PC-3 (cell line): ENCODE measurements at regions of chr1 and their contacts with region 1.

Region 1: DNA sequence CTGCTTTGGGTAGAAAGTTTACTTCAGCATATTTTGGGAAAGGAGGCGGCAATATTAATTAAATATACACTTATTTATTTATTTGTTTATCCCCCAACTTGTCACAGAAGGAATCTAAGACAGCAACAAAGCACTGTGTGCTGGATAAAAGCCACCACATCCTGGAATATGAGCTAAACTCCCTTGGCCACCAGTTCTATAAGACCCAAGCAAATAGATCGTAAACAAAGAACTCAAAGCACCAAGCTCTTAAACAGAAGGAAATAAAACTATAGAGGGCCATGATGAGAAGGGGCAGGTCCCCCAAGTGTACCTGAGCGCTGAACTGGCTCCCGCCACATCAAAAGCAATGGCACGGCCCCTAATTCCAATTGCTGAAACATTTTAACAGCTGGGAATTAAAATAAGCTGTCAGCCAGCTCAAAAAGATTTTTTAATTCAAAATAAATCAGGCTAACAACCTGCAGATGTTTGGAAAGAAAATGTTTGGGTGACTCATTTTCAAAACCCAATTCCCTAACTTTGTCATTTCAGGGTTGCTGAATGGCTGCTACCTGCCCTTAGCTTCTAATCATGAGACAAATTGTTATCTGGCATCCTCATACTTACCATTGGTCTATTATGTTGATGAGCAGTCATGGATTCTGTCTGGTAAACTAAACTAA is 127.1 kb downstream of the SLC30A10 start:
- DNase-seq: no peak
- ATAC-seq: no peak
- H3K4me3 ChIP-seq: no peak overlapping the region
- H3K27ac ChIP-seq: no peak overlapping the region
- H3K4me1 ChIP-seq: peaks cover 16% of the 10 kb centered on the region
- H3K27me3 ChIP-seq: no peaks in the 10 kb centered on the region
- CTCF ChIP-seq: no peak

Region 2: DNA sequence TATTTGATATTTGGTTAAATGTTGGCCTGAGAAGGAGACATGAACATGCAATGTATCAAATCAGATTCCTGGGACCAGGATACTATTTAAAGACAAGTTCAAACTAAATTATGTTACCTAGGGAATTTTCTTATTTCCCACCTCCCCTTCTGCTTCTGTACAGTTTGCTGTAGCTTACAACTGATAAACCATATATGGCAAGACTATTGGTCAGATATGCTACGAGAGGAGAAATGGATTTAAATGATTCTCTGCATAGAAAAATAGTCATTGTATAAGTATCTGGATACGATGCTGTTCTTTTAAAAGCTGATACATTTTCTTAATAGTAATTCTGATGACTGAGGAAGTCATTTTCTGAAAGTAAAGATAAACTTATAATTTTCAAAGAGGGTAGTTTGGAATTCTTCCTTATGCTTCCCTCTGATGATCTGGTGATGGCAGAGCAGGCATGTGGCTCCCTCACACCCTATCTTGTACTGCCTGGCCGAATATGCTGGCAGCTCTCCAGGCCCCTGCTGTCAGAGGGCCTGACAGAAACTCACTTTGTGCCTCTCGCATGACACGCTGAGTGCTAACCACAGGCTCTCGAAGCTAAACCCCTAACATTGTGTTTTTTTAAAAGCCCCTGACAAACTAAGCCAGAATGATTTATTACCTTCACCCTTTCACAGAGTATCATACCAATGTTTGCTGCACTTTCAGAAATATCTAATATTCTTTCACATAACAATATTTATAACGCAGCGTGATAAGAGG is 1496.8 kb before region 1 on chr1:
- CTCF ChIA-PET with region 1: no interaction called
- POLR2A ChIA-PET with region 1: interaction called, 15 read pairs
- intact Hi-C with region 1: no loop called
- DNase-seq: no peak
- ATAC-seq: no peak
- H3K4me3 ChIP-seq: no peak overlapping the region
- H3K27ac ChIP-seq: no peak overlapping the region
- H3K4me1 ChIP-seq: 0 out of 2 replicates have a peak, but pooled peaks cover 4% of the 10 kb centered on the region
- H3K27me3 ChIP-seq: no peaks in the 10 kb centered on the region
- CTCF ChIP-seq: no peak

Region 3: GRCh38 chr1:220123889-220124288 is 322.6 kb after region 1 on chr1:
- CTCF ChIA-PET with region 1: no interaction called
- POLR2A ChIA-PET with region 1: no interaction called
- intact Hi-C with region 1: no loop called
- DNase-seq: peak; percentile 27
- ATAC-seq: 0 out of 2 replicates have a peak, but pooled peaks have one; percentile 35
- H3K4me3 ChIP-seq: no peak overlapping the region
- H3K27ac ChIP-seq: no peak overlapping the region
- H3K4me1 ChIP-seq: no peaks in the 10 kb centered on the region
- H3K27me3 ChIP-seq: no peaks in the 10 kb centered on the region
- CTCF ChIP-seq: peak; percentile 59